Cardiac septum (tissue), 1 donor: ENCODE measurements at regions of chr7 and their contacts with region 1.

Region 1: GRCh38 chr7:94374231-94374630 is 20.5 kb upstream of the COL1A2 start:
- DNase-seq: peak; percentile 83

Region 2: GRCh38 chr7:94395141-94396036 is 21.2 kb after region 1 on chr7:
- intact Hi-C with region 1: loop called (anchors 1 kb)
- DNase-seq: no peak

Region 3: GRCh38 chr7:94510582-94511496 is 136.6 kb after region 1 on chr7:
- intact Hi-C with region 1: no loop called
- DNase-seq: no peak

Region 4: GRCh38 chr7:94710256-94710655 is 336.0 kb after region 1 on chr7:
- intact Hi-C with region 1: no loop called
- DNase-seq: no peak